ENCODE measurements at regions of chr17 and their contacts with region 1.

Region 1: DNA sequence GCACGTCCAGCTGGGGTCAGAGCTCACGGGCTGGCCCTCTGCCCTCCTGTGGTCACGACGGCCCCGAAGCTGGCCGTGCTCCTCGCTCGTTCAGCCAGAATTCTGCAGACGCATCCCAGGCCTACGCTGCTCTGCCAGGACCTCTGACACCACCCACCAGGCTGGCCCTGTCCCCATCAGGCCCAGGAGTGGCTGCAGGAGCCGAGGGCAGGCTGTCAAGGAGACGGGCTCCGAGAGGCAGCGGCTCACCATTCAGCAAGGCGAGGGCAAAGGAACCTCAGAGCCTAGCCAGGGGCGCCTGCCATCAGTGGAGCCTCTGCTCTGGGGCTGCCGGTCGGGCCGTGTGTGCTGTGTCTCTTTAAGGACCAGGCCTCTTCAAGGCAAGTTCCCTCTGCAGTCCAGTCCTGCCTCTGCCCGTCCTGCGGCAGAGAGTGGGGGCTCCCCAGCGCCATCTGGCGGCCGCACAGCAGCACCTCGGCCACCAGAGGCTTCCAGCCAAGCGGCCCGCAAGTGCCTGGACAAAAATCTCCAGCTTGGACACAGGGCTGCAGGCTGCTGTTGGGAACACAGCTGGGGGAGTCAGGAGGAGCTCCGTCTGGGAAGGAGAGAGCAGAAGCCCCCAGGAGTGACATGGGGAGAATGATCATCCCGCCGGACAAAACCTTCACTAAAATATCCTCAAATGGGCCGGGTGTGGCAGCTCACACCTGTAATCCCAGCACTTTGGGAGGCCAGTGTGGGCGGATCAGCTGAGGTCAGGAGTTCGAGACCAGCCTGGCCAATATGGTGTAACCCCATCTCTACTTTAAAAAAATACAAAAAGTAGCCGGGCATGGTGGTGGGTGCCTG is 7.4 kb upstream of the ABR start:
- DNase-seq: peak; percentile 49 to 82 (median 73)
- ATAC-seq: peak; percentile 94
- H3K4me3 ChIP-seq: no peak overlapping the region
- H3K4me3 Mint-ChIP-seq: peak overlapping the region in 1 of 10 donors; percentile 2
- H3K27ac ChIP-seq: no peak overlapping the region
- H3K27ac Mint-ChIP-seq: peak overlapping the region in 1 of 9 donors; percentile 14
- H3K4me1 ChIP-seq: peaks cover 0 to 7% of the 10 kb centered on the region in 2 donors
- H3K4me1 Mint-ChIP-seq: peaks cover 0 to 14% (median 7%) of the 10 kb centered on the region in 7 donors
- H3K27me3 ChIP-seq: no peaks in the 10 kb centered on the region
- H3K27me3 Mint-ChIP-seq: peaks cover 0 to 22% (median 0%) of the 10 kb centered on the region in 5 donors

Region 2: DNA sequence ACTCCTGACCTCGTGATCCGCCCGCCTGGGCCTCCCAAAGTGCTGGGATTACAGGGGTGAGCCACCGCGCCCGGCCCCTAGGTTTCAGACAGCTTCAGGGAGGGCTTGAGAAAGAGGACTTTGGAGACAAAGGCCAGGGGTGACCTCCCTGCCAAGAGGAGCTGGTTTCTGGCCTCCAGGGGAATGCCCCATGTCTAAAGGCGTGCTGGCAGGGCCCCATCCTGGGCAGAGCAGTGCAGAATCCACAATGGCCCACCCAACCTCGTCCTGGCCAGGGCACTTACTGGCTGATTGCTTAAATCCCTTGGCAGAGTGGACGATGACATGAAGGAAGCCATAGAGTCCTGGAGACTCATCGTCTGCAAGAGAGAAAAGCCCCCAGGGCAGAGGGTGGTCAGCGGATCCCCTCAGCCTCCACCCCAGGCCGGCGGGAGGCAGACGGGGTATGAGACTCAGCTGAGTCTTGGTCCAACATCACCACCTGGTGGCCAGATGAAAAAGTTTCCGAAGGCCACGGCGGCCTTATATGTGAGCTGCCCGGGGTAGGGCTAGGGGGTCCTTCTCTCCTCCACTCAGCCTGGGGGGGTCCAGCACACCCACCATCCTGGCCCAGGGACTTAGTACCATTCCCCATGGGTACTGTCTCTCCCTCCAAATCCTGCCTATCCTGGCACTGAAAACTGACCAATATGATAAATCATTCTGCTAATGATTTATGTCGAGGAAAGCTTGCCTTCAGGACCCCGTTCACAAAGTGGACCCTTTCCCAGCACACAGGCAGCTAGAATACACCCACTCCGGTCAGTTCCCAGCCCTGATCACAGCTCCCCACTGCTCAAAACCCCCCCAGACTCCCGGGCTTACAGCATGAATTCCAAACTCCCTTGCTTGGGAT is 131.1 kb before region 1 on chr17:
- CTCF ChIA-PET with region 1: no interaction called
- POLR2A ChIA-PET with region 1: no interaction called
- intact Hi-C with region 1: loop called in 1 of 2 experiments (anchors 1 kb)
- DNase-seq: peak in 6 of 9 donors; percentile 16 to 42 (median 31)
- ATAC-seq: peak; percentile 74
- H3K4me3 ChIP-seq: no peak overlapping the region
- H3K4me3 Mint-ChIP-seq: no peak overlapping the region
- H3K27ac ChIP-seq: no peak overlapping the region
- H3K27ac Mint-ChIP-seq: peak overlapping the region in 2 of 9 donors; percentile 21 to 78
- H3K4me1 ChIP-seq: no peaks in the 10 kb centered on the region
- H3K4me1 Mint-ChIP-seq: peaks cover 0 to 4% (median 0%) of the 10 kb centered on the region in 7 donors
- H3K27me3 ChIP-seq: no peaks in the 10 kb centered on the region
- H3K27me3 Mint-ChIP-seq: no peaks in the 10 kb centered on the region

Region 3: DNA sequence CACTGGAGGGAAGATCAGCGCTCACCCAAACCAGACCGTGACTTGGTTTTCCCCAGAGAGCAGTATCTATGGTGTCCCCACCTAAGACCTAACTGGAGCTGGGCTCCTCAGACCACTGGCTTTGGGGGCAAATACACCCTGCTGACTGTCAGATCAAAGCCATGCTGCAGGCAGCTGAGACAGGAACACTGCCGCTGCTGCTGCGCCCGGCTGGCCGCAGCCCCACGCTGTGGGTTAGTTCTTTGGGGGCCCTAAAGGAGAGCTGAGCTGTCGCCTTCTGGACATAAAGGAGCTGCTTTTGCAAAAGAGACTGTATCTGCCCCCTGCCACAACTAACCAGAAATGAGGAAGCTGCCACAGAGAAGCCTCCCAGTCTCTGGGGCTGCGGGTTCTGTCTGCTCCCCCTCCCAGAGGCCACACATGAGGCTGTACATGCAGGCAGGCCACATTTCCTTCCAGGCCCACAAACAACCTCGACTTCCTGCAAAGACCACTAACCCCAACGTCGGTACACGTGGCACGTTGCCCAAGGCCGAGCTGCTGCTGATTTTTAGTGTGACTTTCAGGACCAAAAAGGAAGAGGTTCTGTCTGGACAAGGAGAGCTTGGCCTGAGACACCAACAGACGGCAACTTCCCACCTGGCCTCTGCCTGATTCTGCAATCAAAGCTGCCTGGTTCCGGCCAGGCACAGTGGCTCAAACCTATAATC is 10.8 kb after region 1 on chr17:
- CTCF ChIA-PET with region 1: interaction called, 11 read pairs
- POLR2A ChIA-PET with region 1: interaction called, 7 read pairs
- intact Hi-C with region 1: no loop called
- DNase-seq: peak in 8 of 9 donors; percentile 34 to 51 (median 42)
- ATAC-seq: peak; percentile 85
- H3K4me3 ChIP-seq: peak overlapping the region; percentile 25
- H3K4me3 Mint-ChIP-seq: peak overlapping the region; percentile 25 to 65 (median 58)
- H3K27ac ChIP-seq: no peak overlapping the region
- H3K27ac Mint-ChIP-seq: peak overlapping the region; percentile 28 to 87 (median 46)
- H3K4me1 ChIP-seq: peaks cover 26 to 57% of the 10 kb centered on the region in 2 donors
- H3K4me1 Mint-ChIP-seq: peaks cover 34 to 56% (median 46%) of the 10 kb centered on the region in 7 donors
- H3K27me3 ChIP-seq: no peaks in the 10 kb centered on the region
- H3K27me3 Mint-ChIP-seq: no peaks in the 10 kb centered on the region

Measured in naive thymus-derived CD4-positive, alpha-beta T cell (primary cell).